ENCODE measurements at regions of chr6 and their contacts with region 1.

Region 1: DNA sequence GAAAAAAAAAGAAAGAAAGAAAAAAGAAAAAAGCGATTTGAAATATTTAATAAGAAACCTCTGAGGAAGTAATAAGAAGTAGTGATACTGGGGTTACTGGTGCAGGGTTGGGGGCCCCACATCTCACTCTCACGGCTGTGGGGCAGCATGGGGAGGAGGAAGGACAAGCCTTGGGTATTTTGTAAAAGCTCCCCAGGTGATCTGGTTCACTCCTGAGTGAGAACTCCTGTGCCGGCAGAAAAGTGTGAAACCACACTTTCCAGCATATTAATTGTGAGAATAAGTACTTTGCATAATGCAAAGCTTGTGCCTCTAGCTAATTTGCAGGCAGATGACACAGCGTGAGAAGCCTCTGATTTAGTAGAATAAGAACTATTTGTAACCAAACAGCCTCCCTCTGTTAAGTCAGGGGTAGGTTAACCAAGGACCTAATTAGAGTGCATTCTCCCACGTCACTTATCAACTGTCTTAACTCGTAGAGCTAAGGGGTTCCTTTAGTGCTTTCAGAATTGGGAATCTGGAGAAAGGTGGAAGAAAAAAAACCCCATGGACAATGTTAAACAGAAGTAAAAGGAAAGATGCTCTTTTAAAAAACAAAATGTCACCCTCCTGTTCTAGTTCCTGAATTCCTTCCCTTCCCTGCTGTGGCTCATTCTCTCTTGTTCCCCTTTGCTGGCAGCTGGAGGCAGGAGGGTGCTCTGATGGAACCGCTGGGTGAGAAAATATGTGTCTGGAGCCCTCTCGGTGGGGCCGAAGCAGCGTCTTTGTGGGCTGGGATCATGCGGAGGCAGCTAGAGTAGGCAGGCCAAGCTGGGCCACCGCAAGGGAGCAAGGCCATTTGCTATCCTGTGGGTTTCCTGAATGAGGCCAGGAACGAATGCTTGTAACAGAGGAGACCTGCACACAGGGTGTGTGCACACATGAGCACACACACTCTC is 108.7 kb downstream of the FYN start:
- DNase-seq: peak; percentile 73 to 87 (median 74)
- H3K4me3 ChIP-seq: peak overlapping the region; percentile 12 to 39
- H3K4me3 Mint-ChIP-seq: peak overlapping the region; percentile 74 to 97 (median 82)
- H3K27ac ChIP-seq: peak overlapping the region; percentile 99
- H3K27ac Mint-ChIP-seq: peak overlapping the region; percentile 97 to 100 (median 99)
- H3K4me1 ChIP-seq: peaks cover 96% of the 10 kb centered on the region
- H3K4me1 Mint-ChIP-seq: peaks cover 88 to 100% (median 94%) of the 10 kb centered on the region in 4 donors
- H3K27me3 ChIP-seq: no peaks in the 10 kb centered on the region
- H3K27me3 Mint-ChIP-seq: no peaks in the 10 kb centered on the region

Region 2: GRCh38 chr6:111631903-111632460 is 132.5 kb before region 1 on chr6:
- CTCF ChIA-PET with region 1: no interaction called
- POLR2A ChIA-PET with region 1: no interaction called
- intact Hi-C with region 1: no loop called
- DNase-seq: no peak
- H3K4me3 ChIP-seq: no peak overlapping the region
- H3K4me3 Mint-ChIP-seq: no peak overlapping the region
- H3K27ac ChIP-seq: no peak overlapping the region
- H3K27ac Mint-ChIP-seq: no peak overlapping the region
- H3K4me1 ChIP-seq: no peaks in the 10 kb centered on the region
- H3K4me1 Mint-ChIP-seq: no peaks in the 10 kb centered on the region
- H3K27me3 ChIP-seq: no peaks in the 10 kb centered on the region
- H3K27me3 Mint-ChIP-seq: no peaks in the 10 kb centered on the region

Region 3: DNA sequence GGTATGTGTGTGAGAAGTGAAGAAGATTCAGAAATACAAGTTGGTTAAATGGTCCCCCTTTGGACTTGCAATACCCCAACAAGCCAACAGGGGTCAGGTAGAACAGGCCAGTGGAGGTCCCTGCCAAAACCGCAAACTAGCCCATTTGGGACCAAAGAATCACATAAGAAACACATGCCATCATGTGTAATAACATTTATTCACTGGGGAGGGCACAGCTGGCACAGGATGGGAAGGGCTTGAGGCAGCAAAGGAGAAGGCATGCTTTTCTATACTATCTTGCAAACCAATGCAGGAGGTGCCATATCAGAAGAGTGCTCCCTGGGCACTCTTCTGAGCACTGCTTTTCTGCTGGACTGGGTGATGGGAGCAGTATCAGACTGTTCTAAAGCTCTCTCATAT is 42.8 kb before region 1 on chr6:
- CTCF ChIA-PET with region 1: interaction called, 10 read pairs
- POLR2A ChIA-PET with region 1: interaction called, 22 read pairs
- intact Hi-C with region 1: loop called (anchors 2 kb)
- DNase-seq: peak; percentile 46 to 57 (median 50)
- H3K4me3 ChIP-seq: no peak overlapping the region
- H3K4me3 Mint-ChIP-seq: peak overlapping the region in 3 of 8 donors; percentile 17 to 81 (median 39)
- H3K27ac ChIP-seq: no peak overlapping the region
- H3K27ac Mint-ChIP-seq: peak overlapping the region; percentile 77 to 92 (median 88)
- H3K4me1 ChIP-seq: peaks cover 76% of the 10 kb centered on the region
- H3K4me1 Mint-ChIP-seq: peaks cover 61 to 84% (median 75%) of the 10 kb centered on the region in 4 donors
- H3K27me3 ChIP-seq: no peaks in the 10 kb centered on the region
- H3K27me3 Mint-ChIP-seq: no peaks in the 10 kb centered on the region

Region 4: DNA sequence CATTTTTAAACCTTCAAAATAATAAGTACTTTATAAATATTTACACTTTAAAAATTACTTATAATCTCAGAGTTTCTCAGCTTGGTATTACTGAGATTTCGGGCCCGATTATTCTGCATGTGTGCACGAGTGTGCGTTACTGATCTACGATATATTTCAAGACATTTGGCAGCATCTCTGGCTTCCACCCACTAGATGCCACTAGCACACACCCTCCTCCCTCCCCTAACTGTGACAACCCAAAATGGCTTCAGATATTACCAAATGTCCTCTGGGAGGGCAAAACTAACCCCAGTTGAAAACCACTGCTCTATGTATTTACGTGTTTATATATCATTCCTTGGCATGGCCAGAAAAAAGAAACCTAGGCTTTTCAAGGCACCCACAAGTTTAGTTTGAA is 12.8 kb after region 1 on chr6:
- CTCF ChIA-PET with region 1: interaction called, 61 read pairs
- POLR2A ChIA-PET with region 1: interaction called, 159 read pairs
- intact Hi-C with region 1: loop called (anchors 1 kb)
- DNase-seq: peak in 3 of 5 donors; percentile 46 to 50 (median 48)
- H3K4me3 ChIP-seq: no peak overlapping the region
- H3K4me3 Mint-ChIP-seq: peak overlapping the region; percentile 31 to 72 (median 62)
- H3K27ac ChIP-seq: peak overlapping the region; percentile 34
- H3K27ac Mint-ChIP-seq: peak overlapping the region in 6 of 7 donors; percentile 76 to 94 (median 90)
- H3K4me1 ChIP-seq: peaks cover 90% of the 10 kb centered on the region
- H3K4me1 Mint-ChIP-seq: peaks cover 67 to 93% (median 79%) of the 10 kb centered on the region in 4 donors
- H3K27me3 ChIP-seq: no peaks in the 10 kb centered on the region
- H3K27me3 Mint-ChIP-seq: no peaks in the 10 kb centered on the region

Region 5: DNA sequence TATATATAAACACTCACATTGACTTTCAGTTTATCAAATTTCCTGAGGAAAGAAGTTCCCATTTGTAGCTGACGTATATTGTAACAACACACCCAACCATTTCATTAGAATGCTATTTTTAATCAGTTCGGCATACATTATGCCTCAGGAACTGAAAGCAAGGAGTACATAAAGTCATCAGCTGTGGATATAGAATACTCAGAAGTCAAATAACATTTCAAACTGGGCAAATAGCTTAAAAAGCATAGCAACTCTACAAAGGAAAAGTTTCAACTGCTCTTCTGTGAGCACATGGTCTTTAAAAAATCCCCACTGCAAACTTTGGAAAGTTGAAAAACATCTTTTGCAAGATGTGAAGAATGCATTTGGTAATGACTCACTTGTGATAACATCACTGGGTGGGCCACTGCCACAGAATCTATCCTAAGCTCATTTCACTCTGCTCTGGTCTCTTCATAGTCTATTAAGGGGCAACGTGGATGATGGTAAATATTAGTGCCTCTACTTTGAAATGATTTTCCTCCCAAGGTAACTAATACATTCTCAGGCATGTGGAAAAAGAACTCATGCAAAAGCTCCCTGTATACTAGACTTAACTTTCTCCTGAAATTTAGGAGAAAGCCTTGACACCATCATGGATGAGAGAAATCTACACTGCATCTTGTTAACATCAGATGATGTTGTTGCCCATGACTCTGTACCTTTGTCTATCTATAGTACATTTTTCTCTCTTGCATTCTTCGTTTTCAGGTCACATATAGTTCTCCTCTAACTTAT is 59.5 kb after region 1 on chr6:
- CTCF ChIA-PET with region 1: interaction called, 7 read pairs
- POLR2A ChIA-PET with region 1: interaction called, 12 read pairs
- intact Hi-C with region 1: no loop called
- DNase-seq: peak in 1 of 5 donors; percentile 73
- H3K4me3 ChIP-seq: no peak overlapping the region
- H3K4me3 Mint-ChIP-seq: peak overlapping the region; percentile 4 to 75 (median 58)
- H3K27ac ChIP-seq: peak overlapping the region; percentile 49
- H3K27ac Mint-ChIP-seq: peak overlapping the region; percentile 67 to 95 (median 87)
- H3K4me1 ChIP-seq: peaks cover 76% of the 10 kb centered on the region
- H3K4me1 Mint-ChIP-seq: peaks cover 64 to 82% (median 70%) of the 10 kb centered on the region in 4 donors
- H3K27me3 ChIP-seq: no peaks in the 10 kb centered on the region
- H3K27me3 Mint-ChIP-seq: no peaks in the 10 kb centered on the region

Region 6: DNA sequence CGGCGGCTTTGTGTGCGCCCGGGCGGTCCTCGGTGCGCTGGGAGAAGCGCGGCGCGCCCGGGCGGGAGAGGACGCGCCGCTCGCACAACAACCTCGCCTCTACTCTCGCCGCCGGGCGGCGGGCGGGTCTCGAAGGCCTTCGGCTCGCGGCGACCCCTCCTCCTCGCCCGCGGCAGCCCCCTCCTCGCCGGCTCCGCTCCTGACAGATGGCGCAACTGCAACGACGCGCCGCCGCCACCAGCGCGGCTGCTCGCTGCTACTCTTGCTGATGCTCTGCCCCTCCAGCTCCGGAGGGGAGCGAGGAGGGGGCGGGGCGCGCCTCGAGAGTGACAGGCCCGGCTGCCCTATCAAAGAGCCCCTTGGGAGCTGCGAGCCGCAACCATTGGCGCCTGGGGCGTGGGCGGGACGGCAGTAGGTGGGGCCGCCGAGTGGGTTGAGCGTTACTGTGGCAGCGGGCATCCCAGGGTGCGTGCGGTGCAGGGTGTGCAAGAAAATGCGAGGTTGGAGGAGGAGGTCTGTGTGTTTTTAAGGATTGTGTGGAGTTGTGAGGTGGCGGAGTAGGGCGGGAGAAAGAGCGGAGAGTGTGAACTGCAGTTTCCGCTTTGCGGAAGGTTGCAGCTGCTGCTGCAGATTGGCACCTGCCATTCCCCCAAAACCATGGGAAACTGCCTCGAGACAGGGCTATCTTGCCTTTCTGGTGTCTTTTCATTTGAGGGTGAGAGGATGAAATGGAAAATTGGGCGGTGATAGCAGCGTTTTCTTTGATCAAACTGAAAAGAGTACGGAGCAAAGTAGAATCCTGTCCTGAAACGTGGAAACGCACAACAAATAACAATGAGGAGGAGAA is 108.9 kb after region 1 on chr6 and contains the start of gene FYN:
- CTCF ChIA-PET with region 1: interaction called, 8 read pairs
- POLR2A ChIA-PET with region 1: interaction called, 32 read pairs
- intact Hi-C with region 1: loop called (anchors 2 kb)
- DNase-seq: peak; percentile 98
- H3K4me3 ChIP-seq: peak within 1 kb of the TSS; percentile 88 to 91
- H3K4me3 Mint-ChIP-seq: peak within 1 kb of the TSS; percentile 96 to 99 (median 98)
- H3K27ac ChIP-seq: peak within 1 kb of the TSS; percentile 88
- H3K27ac Mint-ChIP-seq: peak within 1 kb of the TSS; percentile 93 to 99 (median 98)
- H3K4me1 ChIP-seq: peaks cover 38% of the 10 kb centered on the region
- H3K4me1 Mint-ChIP-seq: peaks cover 27 to 55% (median 37%) of the 10 kb centered on the region in 4 donors
- H3K27me3 ChIP-seq: no peaks in the 10 kb centered on the region
- H3K27me3 Mint-ChIP-seq: no peaks in the 10 kb centered on the region
- total RNA-seq, gene FYN: 664 to 713 TPM

Region 7: DNA sequence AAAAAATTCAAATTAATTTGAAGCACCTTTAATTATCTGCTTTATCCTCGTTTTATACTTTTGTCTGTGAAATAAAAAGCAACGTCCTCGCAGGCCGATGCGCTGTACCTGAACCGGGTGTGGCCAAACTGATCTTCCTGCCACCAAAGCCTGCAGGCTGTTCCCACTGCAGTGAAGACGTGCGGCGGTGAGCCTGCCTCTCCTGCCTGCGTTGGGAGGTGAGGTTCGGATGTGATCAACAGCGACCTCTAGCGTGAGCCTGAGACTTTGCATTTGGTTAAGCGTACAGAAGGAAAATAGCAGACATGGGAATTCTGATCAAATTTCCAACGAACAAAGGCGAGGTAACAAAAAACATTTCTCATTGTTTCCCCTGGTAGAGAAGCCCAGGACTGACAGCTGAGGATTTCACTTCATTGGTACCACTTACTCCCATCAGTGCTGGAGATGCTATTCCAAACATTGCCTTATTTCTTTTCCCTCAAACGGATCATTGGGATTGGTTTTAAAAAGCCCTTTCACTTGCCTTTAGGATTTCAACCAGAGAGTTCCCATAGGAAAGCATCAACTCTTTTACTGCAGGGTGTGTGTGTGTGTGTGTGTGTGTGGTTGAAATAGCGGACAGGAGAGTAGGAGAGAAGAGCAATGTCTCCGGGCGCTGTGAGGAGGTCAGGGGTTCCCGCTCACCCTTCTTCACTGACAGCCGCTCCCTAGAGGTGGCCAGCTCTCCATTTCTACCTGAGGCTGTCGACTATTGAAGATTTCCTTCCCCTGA is 232.8 kb after region 1 on chr6:
- CTCF ChIA-PET with region 1: interaction called, 9 read pairs
- POLR2A ChIA-PET with region 1: interaction called, 7 read pairs
- intact Hi-C with region 1: loop called (anchors 2 kb)
- DNase-seq: peak; percentile 76 to 79 (median 78)
- H3K4me3 ChIP-seq: peak overlapping the region in 1 of 2 donors; percentile 21
- H3K4me3 Mint-ChIP-seq: peak overlapping the region; percentile 64 to 85 (median 80)
- H3K27ac ChIP-seq: no peak overlapping the region
- H3K27ac Mint-ChIP-seq: peak overlapping the region; percentile 76 to 90 (median 85)
- H3K4me1 ChIP-seq: peaks cover 38% of the 10 kb centered on the region
- H3K4me1 Mint-ChIP-seq: peaks cover 39 to 47% (median 42%) of the 10 kb centered on the region in 4 donors
- H3K27me3 ChIP-seq: no peaks in the 10 kb centered on the region
- H3K27me3 Mint-ChIP-seq: no peaks in the 10 kb centered on the region

Measured in CD4-positive, alpha-beta memory T cell (primary cell).